Adrenal gland (tissue), 19 donors: ENCODE measurements at regions of chr1 and their contacts with region 1.

Region 1: GRCh38 chr1:77888081-77888780 is at the start of gene NEXN:
- DNase-seq: peak; percentile 74 to 90 (median 84)
- H3K4me3 ChIP-seq: peak within 1 kb of the TSS; percentile 7 to 88 (median 52)
- H3K27ac ChIP-seq: peak within 1 kb of the TSS; percentile 80 to 97 (median 95)
- H3K4me1 ChIP-seq: peaks cover 0 to 21% of the 10 kb centered on the region in 2 donors
- H3K27me3 ChIP-seq: no peaks in the 10 kb centered on the region
- CTCF ChIP-seq: peak in 1 of 6 experiments; percentile 6
- POLR2A ChIP-seq: peak; percentile 57 to 86
- total RNA-seq, gene NEXN: 6.5 to 24.2 (median 10.5) TPM

Region 2: DNA sequence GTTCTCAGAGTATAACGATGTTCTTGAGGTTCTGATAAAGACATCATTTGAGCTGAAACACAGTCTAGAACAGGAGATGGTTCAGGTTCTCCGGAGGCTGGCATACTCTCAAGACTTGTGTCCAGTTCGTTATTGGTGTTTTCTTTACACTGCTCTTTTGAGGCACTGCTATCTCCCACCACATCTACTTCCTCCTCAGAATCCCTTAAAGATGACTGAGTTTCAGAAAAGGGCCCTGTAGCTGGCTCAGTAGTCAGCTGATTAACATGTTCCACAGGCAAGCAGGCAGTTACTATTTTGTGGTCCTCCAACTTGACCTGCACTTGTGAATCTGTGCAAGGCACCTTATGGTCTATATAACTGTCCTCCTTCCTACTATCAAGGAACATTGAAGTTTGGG is 256.0 kb before region 1 on chr1:
- intact Hi-C with region 1: no loop called
- DNase-seq: no peak
- H3K4me3 ChIP-seq: no peak overlapping the region
- H3K27ac ChIP-seq: no peak overlapping the region
- H3K4me1 ChIP-seq: peaks cover 0 to 13% of the 10 kb centered on the region in 2 donors
- H3K27me3 ChIP-seq: no peaks in the 10 kb centered on the region
- CTCF ChIP-seq: no peak
- POLR2A ChIP-seq: no peak

Region 3: GRCh38 chr1:77825131-77825709 is 63.0 kb before region 1 on chr1:
- intact Hi-C with region 1: loop called in 1 of 2 experiments (anchors 10 kb)
- DNase-seq: peak; percentile 33 to 72 (median 58)
- H3K4me3 ChIP-seq: no peak overlapping the region
- H3K27ac ChIP-seq: peak overlapping the region in 2 of 5 donors; percentile 23 to 44
- H3K4me1 ChIP-seq: peaks cover 0 to 13% of the 10 kb centered on the region in 2 donors
- H3K27me3 ChIP-seq: no peaks in the 10 kb centered on the region
- CTCF ChIP-seq: peak in 4 of 6 experiments; percentile 9 to 30 (median 26)
- POLR2A ChIP-seq: no peak

Region 4: GRCh38 chr1:77961392-77961791 is 73.2 kb after region 1 on chr1:
- intact Hi-C with region 1: no loop called
- DNase-seq: peak in 3 of 7 donors; percentile 32 to 40 (median 35)
- H3K4me3 ChIP-seq: no peak overlapping the region
- H3K27ac ChIP-seq: peak overlapping the region in 3 of 5 donors; percentile 45 to 66 (median 48)
- H3K4me1 ChIP-seq: peaks cover 17 to 47% of the 10 kb centered on the region in 2 donors
- H3K27me3 ChIP-seq: no peaks in the 10 kb centered on the region
- CTCF ChIP-seq: no peak
- POLR2A ChIP-seq: no peak

Region 5: GRCh38 chr1:77978969-77979876 is 91.0 kb after region 1 on chr1 and contains the start of gene FUBP1:
- intact Hi-C with region 1: no loop called
- DNase-seq: peak; percentile 95 to 99 (median 98)
- H3K4me3 ChIP-seq: peak within 1 kb of the TSS; percentile 66 to 84 (median 69)
- H3K27ac ChIP-seq: peak within 1 kb of the TSS; percentile 84 to 99 (median 99)
- H3K4me1 ChIP-seq: peaks cover 24 to 57% of the 10 kb centered on the region in 2 donors
- H3K27me3 ChIP-seq: no peaks in the 10 kb centered on the region
- CTCF ChIP-seq: peak; percentile 45 to 88 (median 76)
- POLR2A ChIP-seq: peak; percentile 87 to 96
- total RNA-seq, gene FUBP1: 65.8 to 169 (median 130) TPM